ENCODE measurements at regions of chr20 and their contacts with region 1.

Region 1: DNA sequence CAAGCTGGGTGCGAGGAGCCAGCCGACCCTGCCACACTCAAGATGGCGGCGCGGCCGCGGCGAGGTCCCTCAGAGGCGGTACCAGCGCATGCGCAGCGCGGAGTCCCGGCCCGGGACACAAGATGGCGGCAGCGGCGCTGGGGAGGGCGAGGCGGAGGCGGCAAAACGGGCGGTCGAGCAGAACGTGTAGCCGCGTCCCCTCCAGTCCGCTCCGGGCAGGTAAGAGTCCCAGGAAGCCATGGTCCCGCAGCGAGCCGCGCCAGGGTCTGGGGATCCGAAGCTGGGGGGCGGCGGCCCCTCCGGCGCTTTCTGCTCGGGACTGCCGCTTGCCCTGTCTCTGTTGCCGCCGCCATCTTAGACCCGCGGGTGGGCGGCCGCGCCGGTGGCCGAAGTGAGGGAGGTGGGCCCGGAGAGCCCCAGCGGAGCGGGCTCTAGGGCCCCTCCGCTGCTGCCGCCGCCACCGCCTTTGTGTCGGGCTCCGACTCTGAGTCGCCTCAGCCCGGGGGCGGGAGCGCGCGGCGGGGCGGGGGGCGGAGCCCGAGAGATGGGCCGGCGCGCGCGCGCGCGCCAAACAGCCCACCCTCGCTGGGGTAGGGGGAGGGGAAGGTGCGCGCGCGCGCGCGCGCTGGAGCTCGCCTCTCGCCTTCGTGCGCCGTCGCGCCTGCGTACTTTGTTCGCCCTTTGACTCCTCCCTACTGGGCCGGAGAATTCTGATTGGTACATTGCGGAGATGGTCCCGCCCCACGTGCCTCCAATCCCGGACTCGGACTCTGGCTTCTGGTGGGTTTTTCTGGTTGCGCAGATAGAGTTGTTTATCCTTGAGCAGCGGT is at the start of gene PCIF1:
- DNase-seq: peak; percentile 96 to 99
- ATAC-seq: peak; percentile 80 to 85
- H3K4me3 ChIP-seq: peak within 1 kb of the TSS; percentile 78
- H3K27ac ChIP-seq: peak within 1 kb of the TSS; percentile 98 to 99
- H3K4me1 ChIP-seq: peaks cover 16% of the 10 kb centered on the region
- CTCF ChIP-seq: no peak
- EP300 ChIP-seq: 0 out of 5 replicates have a peak, but pooled peaks of 1 of the 2 experiments have one; percentile 7
- POLR2A ChIP-seq: peak; percentile 93
- RAD21 ChIP-seq: no peak
- polyA plus RNA-seq, gene PCIF1: 19.7 and 24.3 TPM in 2 replicates

Region 2: DNA sequence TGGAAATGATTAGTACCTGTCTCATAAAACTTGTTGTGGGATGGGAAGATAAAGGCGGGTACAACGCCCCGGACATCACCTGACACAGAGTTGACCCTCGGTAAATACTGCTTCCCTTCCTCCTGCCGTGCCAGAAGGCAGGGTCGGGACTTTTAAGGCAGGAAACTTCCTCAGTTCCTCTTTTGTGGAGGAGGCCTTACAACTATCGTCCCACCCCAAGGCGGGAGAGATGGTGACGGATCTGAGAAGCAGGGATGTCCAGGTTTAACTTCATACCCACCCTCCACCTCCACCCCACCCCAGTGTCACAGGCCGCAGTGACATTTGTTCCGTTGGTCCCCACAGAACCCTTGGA is 142.5 kb before region 1 on chr20:
- CTCF ChIA-PET with region 1: no interaction called
- POLR2A ChIA-PET with region 1: interaction called, 13 read pairs
- DNase-seq: no peak
- ATAC-seq: no peak; a peak in 1 of 6 replicates
- H3K4me3 ChIP-seq: peak overlapping the region; percentile 92
- H3K27ac ChIP-seq: peak overlapping the region; percentile 89 to 96
- H3K4me1 ChIP-seq: 0 out of 3 replicates have a peak, but pooled peaks cover 5% of the 10 kb centered on the region
- CTCF ChIP-seq: no peak
- EP300 ChIP-seq: no peak
- POLR2A ChIP-seq: no peak
- RAD21 ChIP-seq: no peak

Region 3: DNA sequence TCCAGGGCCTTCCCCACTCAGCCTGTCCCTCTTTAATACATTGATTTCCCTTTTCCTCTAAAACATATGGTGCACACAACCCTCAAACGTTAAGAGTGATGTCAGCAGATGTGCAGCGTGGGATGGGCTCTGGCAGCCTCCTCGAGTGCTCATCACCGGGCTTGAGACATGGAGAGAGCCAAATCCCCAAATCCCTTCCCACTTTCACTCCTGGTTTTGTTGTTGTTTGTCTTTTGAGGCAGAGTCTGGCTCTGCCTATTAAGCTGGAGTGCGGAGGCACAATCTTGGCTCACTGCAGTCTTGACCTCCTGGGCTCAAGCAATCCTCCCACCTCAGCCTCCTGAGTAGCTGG is 17.0 kb before region 1 on chr20:
- CTCF ChIA-PET with region 1: interaction called, 12 read pairs
- POLR2A ChIA-PET with region 1: interaction called, 30 read pairs
- DNase-seq: no peak
- ATAC-seq: no peak
- H3K4me3 ChIP-seq: no peak overlapping the region
- H3K27ac ChIP-seq: no peak overlapping the region
- H3K4me1 ChIP-seq: no peaks in the 10 kb centered on the region
- CTCF ChIP-seq: no peak
- EP300 ChIP-seq: no peak
- POLR2A ChIP-seq: no peak
- RAD21 ChIP-seq: no peak

Region 4: GRCh38 chr20:45946149-45946970 is 11.6 kb after region 1 on chr20:
- CTCF ChIA-PET with region 1: interaction called, 8 read pairs
- POLR2A ChIA-PET with region 1: interaction called, 31 read pairs
- DNase-seq: no peak
- ATAC-seq: no peak
- H3K4me3 ChIP-seq: no peak overlapping the region
- H3K27ac ChIP-seq: peak overlapping the region in 1 of 2 experiments; percentile 37; a peak in 1 of 6 replicates
- H3K4me1 ChIP-seq: peaks cover 16% of the 10 kb centered on the region
- CTCF ChIP-seq: no peak
- EP300 ChIP-seq: no peak
- POLR2A ChIP-seq: no peak
- RAD21 ChIP-seq: no peak

Region 5: GRCh38 chr20:45971675-45972499 is 37.1 kb after region 1 on chr20 and contains the start of gene ZNF335:
- CTCF ChIA-PET with region 1: interaction called, 22 read pairs
- POLR2A ChIA-PET with region 1: interaction called, 29 read pairs
- DNase-seq: peak; percentile 92 to 98
- ATAC-seq: peak; percentile 77 to 91
- H3K4me3 ChIP-seq: peak within 1 kb of the TSS; percentile 95
- H3K27ac ChIP-seq: peak within 1 kb of the TSS; percentile 98 to 99
- H3K4me1 ChIP-seq: peaks cover 21% of the 10 kb centered on the region
- CTCF ChIP-seq: no peak
- EP300 ChIP-seq: no peak
- POLR2A ChIP-seq: peak; percentile 53
- RAD21 ChIP-seq: no peak
- polyA plus RNA-seq, gene ZNF335: 7.3 and 8.4 TPM in 2 replicates

Region 6: DNA sequence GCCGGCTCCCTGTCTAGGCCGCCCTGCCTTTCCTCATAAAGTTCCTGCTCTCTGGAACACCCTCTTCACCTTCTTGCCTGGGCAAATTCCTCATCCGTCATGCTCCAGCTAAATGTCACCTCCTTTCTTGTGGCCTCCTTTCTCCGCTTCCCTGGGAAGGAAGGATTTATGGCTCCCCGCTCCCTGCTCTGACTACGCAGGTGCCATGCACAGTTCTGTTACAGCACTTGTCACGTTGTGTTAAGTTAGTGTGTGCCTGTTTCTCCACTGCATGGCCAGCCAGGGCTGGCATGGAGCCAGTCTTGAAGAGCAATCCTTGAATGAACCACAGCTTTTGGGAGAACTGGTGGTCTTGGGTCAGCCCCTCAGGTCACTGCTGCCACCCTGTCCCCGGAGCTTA is 245.1 kb after region 1 on chr20:
- CTCF ChIA-PET with region 1: no interaction called
- POLR2A ChIA-PET with region 1: no interaction called
- DNase-seq: no peak
- ATAC-seq: no peak
- H3K4me3 ChIP-seq: no peak overlapping the region
- H3K27ac ChIP-seq: no peak overlapping the region
- H3K4me1 ChIP-seq: no peaks in the 10 kb centered on the region
- CTCF ChIP-seq: no peak
- EP300 ChIP-seq: no peak
- POLR2A ChIP-seq: no peak
- RAD21 ChIP-seq: no peak